ENCODE measurements at regions of chr13 and their contacts with region 1.

Region 1: DNA sequence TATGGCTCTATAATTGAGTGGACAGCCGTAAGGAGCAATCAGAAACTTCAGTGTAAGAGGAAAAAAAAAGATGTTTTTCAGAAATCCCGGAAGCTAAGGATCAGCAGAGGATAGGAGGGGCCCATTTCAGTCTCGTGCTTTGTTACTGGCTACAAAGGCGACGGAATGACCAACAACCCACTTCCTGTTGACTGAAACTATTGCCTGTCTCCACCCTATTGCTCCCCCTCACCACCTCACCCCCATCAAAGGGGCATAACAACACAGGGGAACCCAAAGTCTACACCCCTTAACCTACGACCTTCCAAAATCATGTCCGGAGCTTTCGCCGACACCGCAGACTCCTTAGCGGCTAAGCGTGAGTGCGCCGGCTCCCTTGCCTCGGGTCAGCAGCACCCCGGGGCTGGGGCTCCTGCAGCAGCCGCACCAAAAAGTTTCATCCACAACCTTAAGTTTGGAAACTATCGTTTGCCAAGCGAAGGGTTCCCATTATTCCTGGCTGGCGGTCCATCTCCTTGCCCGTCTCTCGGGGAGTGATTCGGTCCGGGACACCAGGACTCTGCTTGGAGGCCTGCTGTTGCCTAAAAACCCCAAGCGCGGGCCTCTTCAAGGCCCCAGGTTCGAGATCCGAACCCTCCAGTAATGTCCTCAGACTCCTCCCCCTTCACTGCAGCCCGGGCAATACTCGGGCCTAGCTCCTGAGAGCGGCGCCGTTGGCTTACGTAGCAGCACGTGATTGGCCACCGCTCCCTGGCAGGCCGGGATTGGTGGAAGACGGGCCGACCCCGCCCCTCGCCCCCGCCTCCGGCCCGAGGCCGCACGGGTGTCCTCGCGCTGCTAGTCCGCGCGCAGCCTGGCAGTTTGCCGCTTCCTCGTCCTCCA is at the start of gene TPP2:
- DNase-seq: peak; percentile 99 to 100
- ATAC-seq: peak; percentile 98 to 99 (median 99)
- H3K4me3 ChIP-seq: peak within 1 kb of the TSS; percentile 74 to 98 (median 86)
- H3K27ac ChIP-seq: peak within 1 kb of the TSS; percentile 93 to 99 (median 98)
- H3K4me1 ChIP-seq: peaks cover 4 to 71% (median 49%) of the 10 kb centered on the region in 9 donors
- H3K27me3 ChIP-seq: no peaks in the 10 kb centered on the region
- CTCF ChIP-seq: no peak
- total RNA-seq, gene TPP2: 28.5 to 36.8 (median 32.6) TPM

Region 2: DNA sequence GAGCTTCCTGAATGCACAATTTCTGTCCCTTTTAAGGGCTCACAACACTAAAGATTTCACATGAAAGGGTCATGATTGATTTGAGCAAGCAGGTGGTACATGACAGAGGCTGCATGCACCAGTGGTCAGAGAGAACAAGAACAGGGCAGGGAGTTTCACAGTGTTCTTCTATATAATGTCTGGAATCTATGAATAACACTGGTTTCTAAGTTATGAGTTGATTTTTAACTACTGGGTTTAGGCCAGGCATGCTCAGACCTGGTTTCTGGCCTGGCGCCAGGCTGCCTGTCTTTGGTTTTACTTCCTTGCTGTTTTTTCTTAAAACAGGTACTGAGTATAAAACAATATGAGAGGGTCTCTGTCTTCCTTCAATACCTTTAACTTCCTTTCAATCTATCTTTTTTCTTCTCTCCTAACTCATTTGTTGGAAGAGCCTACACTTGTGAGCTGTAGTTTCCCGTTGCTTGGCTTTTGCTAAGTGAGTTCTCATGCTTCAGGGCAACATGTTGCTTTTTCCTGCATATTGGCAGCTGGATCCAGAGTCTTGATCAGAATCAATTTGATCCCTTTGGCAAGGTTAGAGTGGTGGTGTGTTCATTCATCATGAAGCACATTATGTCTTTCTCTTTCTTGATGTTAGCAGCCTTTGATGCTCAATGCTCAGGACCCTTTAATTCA is 156.0 kb before region 1 on chr13:
- intact Hi-C with region 1: no loop called
- DNase-seq: no peak
- ATAC-seq: no peak
- H3K4me3 ChIP-seq: no peak overlapping the region
- H3K27ac ChIP-seq: no peak overlapping the region
- H3K4me1 ChIP-seq: no peaks in the 10 kb centered on the region
- H3K27me3 ChIP-seq: no peaks in the 10 kb centered on the region
- CTCF ChIP-seq: no peak

Region 3: DNA sequence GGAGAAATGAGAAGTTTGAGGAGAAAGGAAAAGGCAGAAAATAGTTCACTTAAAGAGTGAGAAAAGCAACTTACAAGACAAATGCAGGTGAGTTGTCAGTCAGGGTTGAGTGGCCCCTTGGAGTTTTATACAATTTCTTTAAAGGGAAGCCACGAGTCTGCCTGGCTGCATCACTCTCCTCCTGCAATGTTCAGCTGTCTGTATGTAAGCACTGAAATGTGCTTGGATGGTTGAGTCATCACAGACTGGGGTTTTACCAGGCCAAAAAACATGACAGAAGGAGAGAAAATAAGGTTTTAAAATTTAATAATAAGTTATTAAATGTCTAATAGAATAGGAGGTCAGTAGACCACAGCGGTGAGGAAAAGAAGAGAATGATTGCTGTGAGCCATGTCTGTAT is 143.6 kb before region 1 on chr13:
- intact Hi-C with region 1: no loop called
- DNase-seq: no peak
- ATAC-seq: no peak
- H3K4me3 ChIP-seq: no peak overlapping the region
- H3K27ac ChIP-seq: no peak overlapping the region
- H3K4me1 ChIP-seq: no peaks in the 10 kb centered on the region
- H3K27me3 ChIP-seq: no peaks in the 10 kb centered on the region
- CTCF ChIP-seq: no peak

Region 4: DNA sequence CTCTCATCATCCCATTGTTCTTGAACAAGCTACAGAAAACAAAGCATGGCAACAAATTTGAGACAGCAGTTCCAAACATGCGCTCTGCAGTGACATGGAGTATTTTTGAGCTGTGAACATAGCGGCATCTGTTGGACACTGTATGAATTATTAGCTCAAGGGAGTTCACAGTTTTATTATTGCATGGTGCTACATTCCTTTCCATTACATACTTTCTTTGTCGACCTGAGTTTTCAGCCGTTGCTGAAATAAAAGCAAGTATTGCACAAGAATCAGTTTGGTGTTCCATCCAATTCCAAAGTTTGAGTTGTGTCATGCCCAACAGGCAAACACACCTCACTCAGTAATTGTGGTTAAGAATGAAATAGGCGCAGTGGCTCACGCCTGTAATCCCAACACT is 128.5 kb after region 1 on chr13:
- intact Hi-C with region 1: loop called in 1 of 10 experiments (anchors 5 kb)
- DNase-seq: no peak
- ATAC-seq: peak in 3 of 8 donors; percentile 48 to 70 (median 63)
- H3K4me3 ChIP-seq: no peak overlapping the region
- H3K27ac ChIP-seq: no peak overlapping the region
- H3K4me1 ChIP-seq: peaks cover 0 to 6% (median 0%) of the 10 kb centered on the region in 9 donors
- H3K27me3 ChIP-seq: no peaks in the 10 kb centered on the region
- CTCF ChIP-seq: peak in 7 of 9 donors; percentile 12 to 44 (median 38)

Region 5: GRCh38 chr13:102773441-102774215 is 177.2 kb after region 1 on chr13 and contains the start of gene TEX30:
- intact Hi-C with region 1: loop called in 2 of 10 experiments (anchors 10 kb)
- DNase-seq: peak; percentile 81 to 89
- ATAC-seq: peak; percentile 99 to 100 (median 99)
- H3K4me3 ChIP-seq: peak within 1 kb of the TSS; percentile 63 to 96 (median 86)
- H3K27ac ChIP-seq: peak within 1 kb of the TSS; percentile 32 to 93 (median 83)
- H3K4me1 ChIP-seq: peaks cover 0 to 30% (median 12%) of the 10 kb centered on the region in 9 donors
- H3K27me3 ChIP-seq: no peaks in the 10 kb centered on the region
- CTCF ChIP-seq: peak in 4 of 9 donors; percentile 13 to 23 (median 18)
- total RNA-seq, gene TEX30: 3.9 to 12.3 (median 7.6) TPM

Region 6: GRCh38 chr13:102800145-102801041 is 204.0 kb after region 1 on chr13:
- intact Hi-C with region 1: loop called in 2 of 10 experiments (anchors 5 kb)
- DNase-seq: peak; percentile 86 to 88
- ATAC-seq: peak; percentile 80 to 90 (median 88)
- H3K4me3 ChIP-seq: peak overlapping the region; percentile 73 to 99 (median 84)
- H3K27ac ChIP-seq: peak overlapping the region; percentile 78 to 95 (median 90)
- H3K4me1 ChIP-seq: peaks cover 0 to 57% (median 35%) of the 10 kb centered on the region in 9 donors
- H3K27me3 ChIP-seq: peaks cover 0 to 26% (median 0%) of the 10 kb centered on the region in 7 donors
- CTCF ChIP-seq: peak; percentile 76 to 92 (median 80)

Region 7: DNA sequence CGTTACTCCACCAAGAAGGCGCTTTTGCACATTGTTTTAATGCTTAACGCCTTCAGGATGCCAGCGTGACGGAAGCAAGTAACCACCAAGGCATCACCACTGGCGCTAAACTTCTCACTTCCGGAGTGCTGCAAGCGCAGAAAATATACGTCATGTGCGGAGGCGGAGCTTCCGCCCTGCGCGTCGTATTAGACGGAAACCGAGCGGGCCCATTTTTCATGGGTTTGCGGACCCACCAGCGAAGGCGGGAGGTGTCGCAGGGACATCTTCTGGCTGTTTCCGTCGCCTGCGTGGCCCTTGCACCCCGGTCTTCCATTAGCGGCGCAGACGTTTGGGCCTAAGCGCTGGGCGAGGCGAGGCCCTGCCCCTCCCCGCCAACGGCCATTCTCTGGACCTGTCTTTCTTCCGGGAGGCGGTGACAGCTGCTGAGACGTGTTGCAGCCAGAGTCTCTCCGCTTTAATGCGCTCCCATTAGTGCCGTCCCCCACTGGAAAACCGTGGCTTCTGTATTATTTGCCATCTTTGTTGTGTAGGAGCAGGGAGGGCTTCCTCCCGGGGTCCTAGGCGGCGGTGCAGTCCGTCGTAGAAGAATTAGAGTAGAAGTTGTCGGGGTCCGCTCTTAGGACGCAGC is 249.4 kb after region 1 on chr13 and contains the start of gene ERCC5:
- intact Hi-C with region 1: loop called in 7 of 10 experiments (anchors 1 to 5 kb)
- DNase-seq: peak; percentile 93 to 96
- ATAC-seq: peak; percentile 93 to 97 (median 95)
- H3K4me3 ChIP-seq: peak within 1 kb of the TSS; percentile 76 to 98 (median 88)
- H3K27ac ChIP-seq: peak within 1 kb of the TSS; percentile 88 to 98 (median 95)
- H3K4me1 ChIP-seq: peaks cover 0 to 37% (median 28%) of the 10 kb centered on the region in 9 donors
- H3K27me3 ChIP-seq: no peaks in the 10 kb centered on the region
- CTCF ChIP-seq: peak in 1 of 9 donors; percentile 12
- total RNA-seq, gene ERCC5: 26.5 to 37.7 (median 33.4) TPM

Measured in heart right ventricle (tissue), 16 donors.